Right cardiac atrium (tissue), 5 donors: ENCODE measurements at regions of chr21 and their contacts with region 1.

Region 1: DNA sequence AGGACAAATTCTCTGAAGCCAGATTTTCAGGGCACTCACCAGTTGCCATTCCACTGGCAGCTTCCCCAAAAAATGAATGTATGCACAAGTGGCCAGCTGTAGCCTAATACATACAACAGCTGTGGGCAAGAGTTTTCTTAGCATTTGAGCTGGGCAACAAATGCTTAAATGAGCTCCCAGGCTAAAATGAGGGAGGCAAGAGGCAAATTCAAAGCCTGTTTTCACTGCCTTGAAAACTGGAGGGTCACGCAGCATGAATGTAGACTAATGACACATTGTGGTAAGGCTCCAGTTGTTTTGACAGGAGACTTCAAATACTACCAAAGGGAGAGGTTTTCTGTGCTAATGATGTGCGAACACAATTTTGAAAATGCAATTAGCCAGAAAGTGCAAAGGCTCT is 88.2 kb downstream of the TIAM1 start:
- DNase-seq: no peak
- ATAC-seq: no peak
- H3K4me3 ChIP-seq: no peak overlapping the region
- H3K27ac ChIP-seq: no peak overlapping the region
- H3K4me1 ChIP-seq: peaks cover under 1% of the 10 kb centered on the region
- H3K27me3 ChIP-seq: no peaks in the 10 kb centered on the region

Region 2: GRCh38 chr21:30962013-30962412 is 293.9 kb before region 1 on chr21:
- intact Hi-C with region 1: no loop called
- DNase-seq: no peak
- ATAC-seq: no peak
- H3K4me3 ChIP-seq: no peak overlapping the region
- H3K27ac ChIP-seq: no peak overlapping the region
- H3K4me1 ChIP-seq: peaks cover 2% of the 10 kb centered on the region
- H3K27me3 ChIP-seq: no peaks in the 10 kb centered on the region

Region 3: GRCh38 chr21:31213795-31214194 is 42.1 kb before region 1 on chr21:
- intact Hi-C with region 1: loop called in 2 of 4 experiments (anchors 5 to 10 kb)
- DNase-seq: no peak
- ATAC-seq: no peak
- H3K4me3 ChIP-seq: no peak overlapping the region
- H3K27ac ChIP-seq: no peak overlapping the region
- H3K4me1 ChIP-seq: no peaks in the 10 kb centered on the region
- H3K27me3 ChIP-seq: no peaks in the 10 kb centered on the region